ENCODE measurements at regions of chr9 and their contacts with region 1.

Region 1: DNA sequence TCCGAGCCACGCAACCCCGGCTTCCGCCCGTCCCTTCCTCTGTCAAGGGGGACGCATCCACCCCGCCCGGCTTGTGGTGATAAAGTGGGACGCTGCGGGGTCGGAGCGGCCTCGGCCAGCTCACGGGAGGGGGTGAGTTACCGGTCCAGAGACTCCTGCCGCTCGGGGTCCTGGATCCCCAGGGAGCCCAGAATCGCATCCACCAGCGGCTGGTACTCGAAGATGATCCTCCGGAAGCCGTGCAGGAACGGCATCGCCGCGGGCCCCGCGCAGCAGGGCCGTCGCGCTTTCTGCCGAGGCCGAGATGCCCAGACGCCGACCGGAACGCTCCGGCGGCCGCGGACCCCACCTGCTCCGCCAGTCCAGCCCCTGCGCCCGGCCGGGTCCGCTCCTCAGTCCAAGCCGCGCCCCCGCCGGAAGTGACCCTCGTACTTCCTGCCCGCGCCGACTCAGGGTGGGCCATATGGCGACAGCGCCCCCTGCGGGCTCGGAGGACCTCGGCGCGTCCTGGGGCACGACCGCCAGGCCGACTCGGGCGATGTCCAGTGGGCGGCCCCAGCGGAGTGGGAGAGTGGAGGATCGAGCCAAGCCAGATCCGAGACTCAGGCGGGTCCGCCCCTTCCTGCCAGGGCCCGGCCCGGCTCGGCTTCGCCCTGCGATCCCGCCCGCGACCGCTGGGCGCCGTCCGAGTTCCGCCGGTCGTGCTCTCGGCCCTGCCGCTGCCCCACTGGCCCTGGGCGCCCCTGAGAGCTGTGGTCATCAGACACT is at the start of gene ASB6:
- DNase-seq: peak; percentile 96
- H3K4me3 Mint-ChIP-seq: peak within 1 kb of the TSS; percentile 76
- H3K27ac Mint-ChIP-seq: peak within 1 kb of the TSS; percentile 58
- H3K4me1 Mint-ChIP-seq: peaks cover 15% of the 10 kb centered on the region
- H3K27me3 Mint-ChIP-seq: no peaks in the 10 kb centered on the region
- total RNA-seq, gene ASB6: 14.1 to 15.7 TPM

Region 2: GRCh38 chr9:129626079-129626624 is 15.8 kb before region 1 on chr9 and contains the start of gene NTMT1:
- CTCF ChIA-PET with region 1: interaction called, 70 read pairs
- POLR2A ChIA-PET with region 1: interaction called, 4 read pairs
- intact Hi-C with region 1: loop called (anchors 2 kb)
- DNase-seq: peak; percentile 95
- H3K4me3 Mint-ChIP-seq: peak within 1 kb of the TSS; percentile 77
- H3K27ac Mint-ChIP-seq: peak within 1 kb of the TSS; percentile 91
- H3K4me1 Mint-ChIP-seq: peaks cover 58% of the 10 kb centered on the region
- H3K27me3 Mint-ChIP-seq: peaks cover 9% of the 10 kb centered on the region
- total RNA-seq, gene NTMT1: 59.9 to 64.6 TPM

Region 3: DNA sequence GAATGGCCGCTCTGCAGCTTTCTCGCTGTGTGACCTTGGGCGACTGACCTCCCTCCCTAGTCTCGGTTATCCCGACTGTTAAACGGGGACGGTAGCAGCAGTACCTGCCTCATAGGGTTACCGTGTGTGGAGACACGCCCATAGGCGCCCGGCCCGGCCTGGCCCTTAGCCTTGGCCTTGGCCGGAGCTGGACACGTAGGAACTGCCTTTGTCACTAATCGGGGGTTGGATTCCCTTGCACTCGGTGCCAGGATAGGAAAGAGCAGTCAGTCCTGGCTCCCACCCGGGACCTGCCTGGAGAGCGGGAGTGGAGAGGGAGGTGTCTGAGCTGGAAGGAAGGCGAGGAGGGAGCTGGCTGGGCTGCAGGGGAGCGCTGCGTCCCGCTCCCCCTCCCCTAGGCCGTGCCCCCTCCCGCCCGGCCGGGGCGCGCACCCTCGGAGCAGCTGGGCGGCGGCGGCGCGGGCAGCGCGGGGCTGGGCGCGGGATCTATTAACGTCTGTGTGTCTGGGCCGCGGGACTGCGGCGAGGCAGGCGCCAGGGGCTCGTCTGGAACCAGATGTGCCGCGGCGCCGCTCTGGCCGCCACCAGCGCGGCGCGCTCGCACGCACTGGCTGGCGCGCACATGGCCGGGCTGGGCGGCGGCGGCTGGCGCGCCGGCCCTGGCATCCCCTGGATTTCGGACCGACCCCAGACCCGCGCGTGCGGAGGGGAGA is 55.2 kb after region 1 on chr9:
- CTCF ChIA-PET with region 1: no interaction called
- POLR2A ChIA-PET with region 1: no interaction called
- intact Hi-C with region 1: loop called (anchors 10 kb)
- DNase-seq: peak; percentile 16
- H3K4me3 Mint-ChIP-seq: peak overlapping the region; percentile 66
- H3K27ac Mint-ChIP-seq: no peak overlapping the region
- H3K4me1 Mint-ChIP-seq: peaks cover 5% of the 10 kb centered on the region
- H3K27me3 Mint-ChIP-seq: peaks cover 32% of the 10 kb centered on the region

Region 4: DNA sequence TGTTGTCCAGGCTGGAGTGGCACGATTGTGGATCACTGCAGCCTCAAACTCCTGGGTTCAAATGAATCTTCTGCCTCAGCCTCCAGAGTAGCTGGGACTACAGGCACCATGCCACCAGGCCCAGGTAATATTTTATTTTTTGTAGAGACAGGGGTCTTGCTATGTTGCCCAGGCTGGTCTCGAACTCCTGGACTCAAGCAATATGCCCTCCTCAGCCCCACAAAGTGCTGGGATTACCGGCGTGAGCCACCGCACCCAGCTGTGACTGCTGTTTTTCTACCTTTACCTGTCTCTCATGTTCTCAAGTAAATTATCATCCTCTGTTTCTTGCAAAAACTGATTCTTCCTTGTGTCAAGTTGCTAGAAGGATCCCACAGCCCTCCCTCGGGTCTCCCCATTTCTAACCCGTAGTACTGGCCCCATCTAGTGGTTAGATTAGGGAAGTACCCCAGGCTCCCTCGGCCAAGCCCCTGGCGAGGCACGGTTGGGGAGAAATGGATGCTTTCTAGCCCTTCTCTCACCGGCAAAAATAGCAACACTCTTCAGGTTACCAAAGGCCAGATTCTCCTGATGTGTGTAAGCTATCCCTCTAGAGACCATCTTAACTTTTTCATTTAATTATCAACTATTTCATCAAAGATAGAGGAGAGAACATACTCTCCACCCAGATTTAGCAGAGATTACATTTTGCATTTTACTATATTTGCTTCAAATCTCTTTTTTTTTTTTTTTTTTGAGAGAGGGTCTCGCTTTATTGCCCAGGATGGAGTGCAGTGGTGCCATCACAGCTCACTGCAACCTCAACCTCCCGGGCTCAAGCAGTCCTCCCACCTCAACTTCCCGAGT is 141.8 kb after region 1 on chr9:
- CTCF ChIA-PET with region 1: interaction called, 22 read pairs
- POLR2A ChIA-PET with region 1: no interaction called
- intact Hi-C with region 1: loop called (anchors 5 kb)
- DNase-seq: peak; percentile 80
- H3K4me3 Mint-ChIP-seq: no peak overlapping the region
- H3K27ac Mint-ChIP-seq: no peak overlapping the region
- H3K4me1 Mint-ChIP-seq: no peaks in the 10 kb centered on the region
- H3K27me3 Mint-ChIP-seq: no peaks in the 10 kb centered on the region

Measured in activated CD4-positive, alpha-beta memory T cell treated with anti-CD3 and anti-CD28 coated beads for 36 hours (primary cell).